ENCODE measurements at regions of chr1 and their contacts with region 1.

Region 1: GRCh38 chr1:107820805-107821204 is 144.2 kb downstream of the VAV3 start:
- DNase-seq: no peak
- H3K4me3 Mint-ChIP-seq: no peak overlapping the region
- H3K27ac Mint-ChIP-seq: no peak overlapping the region
- H3K4me1 Mint-ChIP-seq: peaks cover 19% of the 10 kb centered on the region
- H3K27me3 Mint-ChIP-seq: no peaks in the 10 kb centered on the region

Region 2: DNA sequence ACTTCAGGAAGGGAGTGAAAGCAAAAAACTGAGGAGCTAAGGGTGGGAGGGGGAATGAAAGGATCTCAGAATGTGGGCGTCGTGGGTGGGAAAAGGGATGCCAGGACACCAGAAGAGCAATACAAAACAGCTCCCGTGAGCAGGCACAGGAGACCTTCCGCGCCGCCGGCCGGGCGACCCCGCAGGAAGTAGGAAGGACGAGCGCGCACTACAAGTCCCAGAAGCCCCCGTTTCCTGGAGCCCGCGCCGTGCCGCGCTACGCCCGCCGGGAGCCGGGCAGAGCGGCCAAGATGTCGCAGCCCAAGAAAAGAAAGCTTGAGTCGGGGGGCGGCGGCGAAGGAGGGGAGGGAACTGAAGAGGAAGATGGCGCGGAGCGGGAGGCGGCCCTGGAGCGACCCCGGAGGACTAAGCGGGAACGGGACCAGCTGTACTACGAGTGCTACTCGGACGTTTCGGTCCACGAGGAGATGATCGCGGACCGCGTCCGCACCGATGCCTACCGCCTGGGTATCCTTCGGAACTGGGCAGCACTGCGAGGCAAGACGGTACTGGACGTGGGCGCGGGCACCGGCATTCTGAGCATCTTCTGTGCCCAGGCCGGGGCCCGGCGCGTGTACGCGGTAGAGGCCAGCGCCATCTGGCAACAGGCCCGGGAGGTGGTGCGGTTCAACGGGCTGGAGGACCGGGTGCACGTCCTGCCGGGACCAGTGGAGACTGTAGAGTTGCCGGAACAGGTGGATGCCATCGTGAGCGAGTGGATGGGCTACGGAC is 764.2 kb before region 1 on chr1 and contains the start of gene PRMT6:
- CTCF ChIA-PET with region 1: no interaction called
- POLR2A ChIA-PET with region 1: no interaction called
- intact Hi-C with region 1: loop called (anchors 5 kb)
- DNase-seq: peak; percentile 86
- H3K4me3 Mint-ChIP-seq: peak within 1 kb of the TSS; percentile 94
- H3K27ac Mint-ChIP-seq: peak within 1 kb of the TSS; percentile 90
- H3K4me1 Mint-ChIP-seq: peaks cover 22% of the 10 kb centered on the region
- H3K27me3 Mint-ChIP-seq: no peaks in the 10 kb centered on the region
- total RNA-seq, gene PRMT6: 9.5 to 9.7 TPM

Region 3: DNA sequence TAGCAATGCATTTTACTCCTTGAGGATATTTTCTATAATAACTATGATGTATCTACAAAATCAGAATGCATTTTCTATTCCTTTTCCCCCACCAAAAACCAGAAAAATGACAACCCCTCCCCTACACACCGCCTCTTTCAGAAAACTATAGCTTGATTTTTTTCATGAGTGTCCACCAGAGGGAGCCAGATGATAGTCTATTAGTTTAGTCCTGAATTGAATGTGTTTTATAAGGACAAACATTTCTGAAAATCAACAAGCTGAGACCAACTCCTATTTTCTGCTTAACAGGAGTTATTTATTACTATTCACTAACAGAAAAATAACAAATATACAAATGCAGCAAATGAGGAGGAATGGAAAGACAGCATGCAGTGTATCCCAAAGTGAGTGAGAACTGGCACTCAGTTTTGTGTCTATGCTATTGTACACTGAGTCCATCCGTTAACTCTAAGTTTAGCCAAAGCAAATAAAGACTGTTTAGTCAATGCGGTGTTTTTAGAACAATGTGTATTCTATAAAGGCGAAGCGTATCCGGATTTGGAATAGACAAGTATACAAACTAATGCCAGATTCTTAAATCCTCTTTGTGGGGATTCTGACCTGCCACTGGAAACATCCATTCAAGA is 38.5 kb before region 1 on chr1:
- CTCF ChIA-PET with region 1: interaction called, 7 read pairs
- POLR2A ChIA-PET with region 1: no interaction called
- intact Hi-C with region 1: loop called (anchors 5 kb)
- DNase-seq: no peak
- H3K4me3 Mint-ChIP-seq: no peak overlapping the region
- H3K27ac Mint-ChIP-seq: no peak overlapping the region
- H3K4me1 Mint-ChIP-seq: peaks cover 24% of the 10 kb centered on the region
- H3K27me3 Mint-ChIP-seq: no peaks in the 10 kb centered on the region

Region 4: DNA sequence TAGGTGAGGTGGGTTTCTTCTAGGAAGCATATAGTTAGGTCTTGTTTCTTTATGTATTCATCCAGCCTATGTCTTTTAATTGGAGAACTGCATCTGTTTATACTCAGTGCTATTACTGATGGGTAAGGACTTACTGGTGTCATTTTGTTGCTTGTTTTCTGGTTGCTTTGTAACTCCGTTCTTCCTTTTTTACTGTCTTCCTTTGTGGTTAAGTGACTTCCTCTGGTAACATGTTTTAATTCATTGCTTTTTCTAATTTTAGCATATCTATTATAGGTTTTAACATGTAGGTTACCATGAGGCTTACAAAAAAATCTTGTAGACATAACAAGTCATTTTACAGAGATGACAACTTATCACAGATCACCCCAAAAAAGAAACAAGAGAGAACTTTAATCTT is 16.7 kb before region 1 on chr1:
- CTCF ChIA-PET with region 1: no interaction called
- POLR2A ChIA-PET with region 1: interaction called, 3 read pairs
- intact Hi-C with region 1: loop called (anchors 2 kb)
- DNase-seq: no peak
- H3K4me3 Mint-ChIP-seq: no peak overlapping the region
- H3K27ac Mint-ChIP-seq: no peak overlapping the region
- H3K4me1 Mint-ChIP-seq: peaks cover 19% of the 10 kb centered on the region
- H3K27me3 Mint-ChIP-seq: no peaks in the 10 kb centered on the region

Region 5: GRCh38 chr1:107870696-107871095 is 49.9 kb after region 1 on chr1:
- CTCF ChIA-PET with region 1: no interaction called
- POLR2A ChIA-PET with region 1: interaction called, 5 read pairs
- intact Hi-C with region 1: loop called (anchors 1 kb)
- DNase-seq: no peak
- H3K4me3 Mint-ChIP-seq: no peak overlapping the region
- H3K27ac Mint-ChIP-seq: no peak overlapping the region
- H3K4me1 Mint-ChIP-seq: peaks cover 4% of the 10 kb centered on the region
- H3K27me3 Mint-ChIP-seq: no peaks in the 10 kb centered on the region

Measured in activated CD4-positive, alpha-beta memory T cell treated with anti-CD3 and anti-CD28 coated beads for 36 hours (primary cell).